Heart right ventricle (tissue), 16 donors: ENCODE measurements at regions of chr5 and their contacts with region 1.

Region 1: GRCh38 chr5:38712391-38712790 is 133.4 kb upstream of the OSMR start:
- DNase-seq: no peak
- ATAC-seq: no peak
- H3K4me3 ChIP-seq: no peak overlapping the region
- H3K27ac ChIP-seq: no peak overlapping the region
- H3K4me1 ChIP-seq: peaks cover 0 to 22% (median 11%) of the 10 kb centered on the region in 9 donors
- H3K27me3 ChIP-seq: no peaks in the 10 kb centered on the region
- CTCF ChIP-seq: no peak

Region 2: GRCh38 chr5:38660194-38660668 is 52.2 kb before region 1 on chr5:
- intact Hi-C with region 1: no loop called
- DNase-seq: peak; percentile 18
- ATAC-seq: peak; percentile 60 to 94 (median 88)
- H3K4me3 ChIP-seq: peak overlapping the region in 4 of 10 donors; percentile 26 to 31 (median 29)
- H3K27ac ChIP-seq: peak overlapping the region in 6 of 10 donors; percentile 21 to 70 (median 56)
- H3K4me1 ChIP-seq: peaks cover 0 to 36% (median 21%) of the 10 kb centered on the region in 9 donors
- H3K27me3 ChIP-seq: no peaks in the 10 kb centered on the region
- CTCF ChIP-seq: no peak

Region 3: GRCh38 chr5:38692781-38693527 is 19.4 kb before region 1 on chr5:
- intact Hi-C with region 1: loop called in 1 of 10 experiments (anchors 2 kb)
- DNase-seq: no peak
- ATAC-seq: no peak
- H3K4me3 ChIP-seq: no peak overlapping the region
- H3K27ac ChIP-seq: no peak overlapping the region
- H3K4me1 ChIP-seq: peaks cover 0 to 22% (median 0%) of the 10 kb centered on the region in 9 donors
- H3K27me3 ChIP-seq: no peaks in the 10 kb centered on the region
- CTCF ChIP-seq: no peak

Region 4: DNA sequence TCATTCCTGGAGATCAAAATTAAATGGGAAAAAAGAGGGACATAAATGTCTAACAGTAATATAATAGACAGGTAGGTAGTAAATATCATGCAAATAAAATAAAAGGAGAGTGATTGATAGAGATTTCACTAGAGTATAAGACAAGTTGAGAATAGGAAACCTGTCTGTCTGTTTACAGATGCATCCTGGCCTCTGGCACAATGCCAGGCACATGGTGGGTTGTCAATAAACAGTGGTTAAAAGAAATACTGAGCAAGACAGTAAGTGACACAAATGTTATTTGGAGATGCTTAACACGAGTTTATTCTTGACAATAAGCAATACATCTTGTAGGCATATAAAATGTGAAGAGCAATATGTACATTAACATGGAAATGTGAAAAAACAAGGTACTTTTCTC is 328.5 kb after region 1 on chr5:
- intact Hi-C with region 1: no loop called
- DNase-seq: peak in 1 of 2 donors; percentile 23
- ATAC-seq: no peak
- H3K4me3 ChIP-seq: no peak overlapping the region
- H3K27ac ChIP-seq: no peak overlapping the region
- H3K4me1 ChIP-seq: peaks cover 0 to 48% (median 18%) of the 10 kb centered on the region in 9 donors
- H3K27me3 ChIP-seq: no peaks in the 10 kb centered on the region
- CTCF ChIP-seq: no peak